Naive thymus-derived CD8-positive, alpha-beta T cell (primary cell): ENCODE measurements at regions of chr17 and their contacts with region 1.

Region 1: DNA sequence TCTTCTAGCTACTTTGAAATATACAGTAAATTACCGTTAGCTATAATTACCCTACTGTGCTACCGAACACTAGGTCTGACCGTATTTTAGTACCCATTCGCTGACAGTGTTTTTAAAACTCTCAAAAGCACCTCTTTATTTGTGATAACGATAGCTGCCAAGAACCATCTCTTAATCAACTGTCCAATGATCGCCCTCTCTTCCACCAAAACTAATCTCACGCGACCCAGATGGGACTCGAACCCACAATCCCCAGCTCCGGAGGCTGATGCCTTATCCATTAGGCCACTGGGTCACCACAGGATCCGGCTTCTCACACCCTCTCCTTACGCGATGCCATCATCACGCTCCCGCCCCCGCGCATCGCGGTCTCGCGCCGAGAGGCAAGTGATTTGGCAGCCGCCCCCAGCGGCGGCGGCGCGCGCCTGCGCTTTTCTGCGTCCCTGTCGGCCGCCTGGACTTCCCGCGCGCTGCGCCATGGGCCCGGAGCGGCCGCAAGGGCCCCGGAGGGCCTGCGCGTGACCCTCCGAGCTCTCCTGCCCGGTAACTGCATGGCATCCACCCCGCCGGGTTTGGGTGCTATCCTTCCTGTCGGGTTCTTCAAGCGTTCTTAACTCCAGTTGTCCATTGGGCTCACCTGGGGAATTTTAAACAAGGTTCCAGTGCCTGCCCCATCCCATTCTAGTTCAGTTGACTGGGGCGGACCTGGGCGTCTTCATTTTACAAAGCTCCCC is 15.7 kb upstream of the KPNA2 start:
- DNase-seq: peak; percentile 85 to 98 (median 95)
- ATAC-seq: peak; percentile 91
- H3K4me3 Mint-ChIP-seq: peak overlapping the region; percentile 77 to 95 (median 87)
- H3K27ac Mint-ChIP-seq: peak overlapping the region; percentile 85 to 100 (median 90)
- H3K4me1 Mint-ChIP-seq: peaks cover 14 to 24% (median 17%) of the 10 kb centered on the region in 4 donors
- H3K27me3 Mint-ChIP-seq: peaks cover 0 to 3% (median 0%) of the 10 kb centered on the region in 5 donors

Region 2: GRCh38 chr17:67993596-67994361 is 26.1 kb before region 1 on chr17:
- POLR2A ChIA-PET with region 1: interaction called, 13 read pairs
- DNase-seq: peak in 2 of 10 donors; percentile 62 to 63
- ATAC-seq: peak in 1 of 2 donors; percentile 59
- H3K4me3 Mint-ChIP-seq: peak overlapping the region; percentile 80 to 97 (median 88)
- H3K27ac Mint-ChIP-seq: peak overlapping the region in 9 of 10 donors; percentile 49 to 91 (median 81)
- H3K4me1 Mint-ChIP-seq: peaks cover 15 to 35% (median 30%) of the 10 kb centered on the region in 4 donors
- H3K27me3 Mint-ChIP-seq: peaks cover 9 to 21% (median 14%) of the 10 kb centered on the region in 5 donors

Region 3: GRCh38 chr17:68124873-68125870 is 105.3 kb after region 1 on chr17:
- POLR2A ChIA-PET with region 1: no interaction called
- DNase-seq: no peak
- ATAC-seq: no peak
- H3K4me3 Mint-ChIP-seq: peak overlapping the region in 1 of 10 donors; percentile 20
- H3K27ac Mint-ChIP-seq: peak overlapping the region in 5 of 10 donors; percentile 38 to 76 (median 46)
- H3K4me1 Mint-ChIP-seq: peaks cover 15 to 28% (median 19%) of the 10 kb centered on the region in 4 donors
- H3K27me3 Mint-ChIP-seq: no peaks in the 10 kb centered on the region